PC-9 (cell line): ENCODE measurements at regions of chr17 and their contacts with region 1.

Region 1: GRCh38 chr17:55527540-55528118 is 16.4 kb upstream of the SMIM36 start:
- DNase-seq: peak; percentile 15 to 41
- H3K4me3 ChIP-seq: no peak overlapping the region
- H3K27ac ChIP-seq: no peak overlapping the region
- H3K4me1 ChIP-seq: no peaks in the 10 kb centered on the region
- H3K27me3 ChIP-seq: 0 out of 2 replicates have a peak, but pooled peaks cover 5% of the 10 kb centered on the region
- CTCF ChIP-seq: peak; percentile 69

Region 2: DNA sequence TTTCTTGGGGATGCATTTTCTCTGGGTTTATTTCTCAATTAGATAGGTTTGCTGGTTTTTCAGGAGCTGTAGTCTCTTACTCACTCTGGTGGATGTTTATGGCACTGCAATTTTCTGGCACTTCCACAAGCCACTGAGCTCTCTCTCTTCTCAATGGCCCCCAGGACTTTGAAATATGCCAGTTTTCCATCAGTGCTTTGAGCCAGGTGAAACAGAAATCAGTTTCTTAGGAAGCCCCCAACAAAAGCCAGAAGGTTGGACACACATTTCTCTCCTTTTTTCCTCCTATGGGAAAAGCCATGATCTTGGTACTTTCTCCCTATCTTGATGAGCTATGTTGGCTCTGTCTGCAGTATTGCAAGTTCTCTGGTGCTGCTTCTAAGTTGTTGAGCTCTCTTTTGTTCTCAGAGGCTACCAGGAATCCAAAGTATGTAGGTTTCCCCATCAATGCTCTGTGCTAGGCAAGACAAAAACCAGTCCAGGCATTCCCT is 74.3 kb after region 1 on chr17:
- CTCF ChIA-PET with region 1: no interaction called
- POLR2A ChIA-PET with region 1: no interaction called
- intact Hi-C with region 1: loop called (anchors 1 kb)
- DNase-seq: peak in 1 of 2 experiments; percentile 39
- H3K4me3 ChIP-seq: no peak overlapping the region
- H3K27ac ChIP-seq: no peak overlapping the region
- H3K4me1 ChIP-seq: no peaks in the 10 kb centered on the region
- H3K27me3 ChIP-seq: peaks cover 13% of the 10 kb centered on the region; the same call in 1 of the 2 replicates
- CTCF ChIP-seq: peak; percentile 84

Region 3: DNA sequence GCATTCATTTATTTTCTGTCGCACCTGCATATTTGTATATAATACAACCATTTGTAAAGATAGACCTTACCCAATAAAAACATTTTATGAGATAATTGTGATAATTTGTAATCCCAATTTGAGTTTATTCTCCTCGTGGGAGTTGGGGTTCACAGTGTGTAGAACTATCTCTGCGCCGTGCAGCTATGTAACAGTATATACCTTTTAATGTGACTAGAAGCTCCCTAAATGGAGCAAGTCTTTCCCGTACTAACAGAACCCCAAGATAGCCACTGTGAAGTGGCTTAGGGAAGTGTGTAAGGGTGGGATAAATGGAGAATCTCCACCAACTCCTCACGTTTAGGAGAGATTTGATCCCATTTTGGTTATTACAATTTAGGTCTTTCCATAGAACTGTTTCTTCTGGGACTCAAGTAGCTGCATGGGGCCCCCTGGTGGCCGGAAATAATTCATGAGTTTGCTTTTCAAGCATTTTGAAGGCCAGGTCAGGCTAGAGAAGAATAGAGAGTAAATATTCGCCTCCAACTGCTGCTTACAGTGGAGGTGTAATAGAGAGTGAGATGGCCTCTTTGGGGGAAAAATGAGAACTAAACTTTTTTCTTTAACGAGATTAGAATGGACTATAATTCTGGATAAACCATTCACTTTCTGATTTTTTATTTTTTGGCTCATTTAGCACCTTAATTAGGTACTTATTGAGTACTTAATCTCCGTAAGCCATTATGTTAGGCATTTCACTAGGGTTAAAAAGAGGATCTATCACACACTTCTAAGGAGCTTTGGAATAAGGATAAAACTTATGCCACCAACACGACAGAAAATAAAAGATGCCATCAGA is 190.5 kb after region 1 on chr17:
- CTCF ChIA-PET with region 1: no interaction called
- POLR2A ChIA-PET with region 1: no interaction called
- intact Hi-C with region 1: loop called (anchors 1 kb)
- DNase-seq: peak; percentile 46 to 50
- H3K4me3 ChIP-seq: no peak overlapping the region
- H3K27ac ChIP-seq: no peak overlapping the region
- H3K4me1 ChIP-seq: no peaks in the 10 kb centered on the region
- H3K27me3 ChIP-seq: peaks cover 52% of the 10 kb centered on the region
- CTCF ChIP-seq: peak; percentile 93

Region 4: GRCh38 chr17:55776271-55776670 is 248.6 kb after region 1 on chr17:
- CTCF ChIA-PET with region 1: no interaction called
- POLR2A ChIA-PET with region 1: no interaction called
- intact Hi-C with region 1: no loop called
- DNase-seq: no peak
- H3K4me3 ChIP-seq: no peak overlapping the region
- H3K27ac ChIP-seq: no peak overlapping the region
- H3K4me1 ChIP-seq: no peaks in the 10 kb centered on the region
- H3K27me3 ChIP-seq: no peaks in the 10 kb centered on the region
- CTCF ChIP-seq: no peak

Region 5: GRCh38 chr17:55825213-55825612 is 297.6 kb after region 1 on chr17:
- CTCF ChIA-PET with region 1: no interaction called
- POLR2A ChIA-PET with region 1: no interaction called
- intact Hi-C with region 1: loop called (anchors 1 kb)
- DNase-seq: no peak
- H3K4me3 ChIP-seq: no peak overlapping the region
- H3K27ac ChIP-seq: no peak overlapping the region
- H3K4me1 ChIP-seq: no peaks in the 10 kb centered on the region
- H3K27me3 ChIP-seq: peaks cover 45% of the 10 kb centered on the region
- CTCF ChIP-seq: peak; percentile 57

Region 6: DNA sequence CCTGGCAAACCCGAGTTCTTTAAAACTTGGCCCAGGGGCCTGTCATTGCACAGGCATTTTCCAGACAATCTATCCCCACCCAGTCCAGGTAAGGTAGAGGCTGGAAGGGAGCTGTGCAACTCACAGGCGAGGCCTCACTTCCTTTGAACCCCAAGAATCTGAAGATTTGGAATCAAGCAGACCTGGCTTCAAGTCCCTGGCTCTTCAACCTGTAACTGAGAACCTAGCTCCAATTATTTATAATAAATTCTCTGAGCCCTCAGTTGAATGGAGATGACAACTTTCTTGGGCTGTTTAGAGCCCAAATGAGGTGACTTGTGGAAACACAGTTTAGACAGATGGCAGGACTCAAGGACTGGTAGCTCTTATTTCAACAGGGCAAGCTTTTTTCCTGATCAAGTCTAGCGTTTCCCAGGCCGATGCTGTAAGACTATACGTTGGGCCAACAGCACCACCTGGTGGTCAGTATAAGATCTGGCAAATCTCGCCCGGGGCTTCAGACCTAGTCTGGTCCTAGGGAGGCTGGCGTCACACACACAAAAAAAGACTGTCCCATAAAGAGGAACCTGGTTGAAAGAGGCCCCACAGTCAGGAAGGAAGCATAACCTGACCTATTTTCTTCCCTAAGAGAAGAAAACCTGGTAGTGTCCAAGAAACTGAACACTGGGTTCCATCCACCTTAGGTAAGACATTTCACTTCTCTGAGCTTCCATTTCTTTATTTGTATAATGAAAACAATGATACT is 1188.2 kb after region 1 on chr17:
- CTCF ChIA-PET with region 1: no interaction called
- POLR2A ChIA-PET with region 1: no interaction called
- intact Hi-C with region 1: loop called (anchors 5 kb)
- DNase-seq: peak; percentile 75 to 76
- H3K4me3 ChIP-seq: no peak overlapping the region
- H3K27ac ChIP-seq: no peak overlapping the region
- H3K4me1 ChIP-seq: peaks cover 14% of the 10 kb centered on the region; the same call in 1 of the 2 replicates
- H3K27me3 ChIP-seq: no peaks in the 10 kb centered on the region
- CTCF ChIP-seq: peak; percentile 94